IMR-90 (cell line): ENCODE measurements at regions of chr6 and their contacts with region 1.

Region 1: DNA sequence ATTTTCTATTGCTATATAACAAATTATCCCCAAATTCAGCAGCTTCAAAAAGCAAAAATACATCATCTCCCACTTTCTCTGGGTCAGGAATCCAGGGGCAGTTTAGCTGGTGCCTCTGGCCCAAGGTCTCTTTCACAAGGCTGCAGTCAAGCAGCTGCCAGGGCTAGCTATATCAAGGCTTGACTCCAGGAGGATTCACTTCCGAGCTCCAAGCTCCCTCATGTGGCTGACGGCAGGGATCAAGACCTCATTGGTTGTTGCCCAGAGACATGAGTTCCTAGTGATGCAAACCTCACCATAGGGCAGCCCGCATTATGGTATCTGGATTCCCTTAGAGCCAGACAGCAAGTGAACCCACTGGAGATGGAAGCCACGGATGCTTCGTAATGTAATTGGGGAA is 1.3 kb upstream of the VNN1 start:
- DNase-seq: peak; percentile 76
- ATAC-seq: peak; percentile 88
- H3K4me3 ChIP-seq: no peak overlapping the region
- H3K27ac ChIP-seq: no peak overlapping the region
- H3K4me1 ChIP-seq: 0 out of 2 replicates have a peak, but pooled peaks cover 3% of the 10 kb centered on the region
- H3K27me3 ChIP-seq: no peaks in the 10 kb centered on the region
- CTCF ChIP-seq: peak; percentile 50
- POLR2A ChIP-seq: no peak
- RAD21 ChIP-seq: peak; percentile 57

Region 2: DNA sequence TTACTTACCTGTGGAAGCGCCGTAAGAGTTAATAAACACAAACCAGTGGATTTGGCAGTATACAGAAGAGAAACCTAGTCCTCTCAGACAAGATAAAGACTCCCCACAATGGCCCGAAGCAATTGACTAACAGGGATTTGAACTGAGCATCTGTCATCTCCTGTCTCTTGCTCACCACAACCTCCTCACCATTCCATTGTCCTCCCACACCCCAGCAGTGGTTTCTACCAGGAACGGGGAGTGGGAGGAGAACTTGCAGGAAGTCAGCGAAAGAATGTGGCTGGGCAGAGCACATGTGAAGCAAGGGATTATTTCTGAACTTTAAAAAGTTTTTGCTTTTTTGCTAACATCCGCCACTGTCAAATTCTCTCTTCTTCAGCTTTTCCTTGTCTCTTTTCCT is 31.7 kb before region 1 on chr6:
- CTCF ChIA-PET with region 1: interaction called, 3 read pairs
- POLR2A ChIA-PET with region 1: no interaction called
- dilution Hi-C with region 1: no loop called
- in situ Hi-C with region 1: no loop called
- intact Hi-C with region 1: loop called (anchors 5 kb)
- DNase-seq: peak; percentile 74
- ATAC-seq: 0 out of 2 replicates have a peak, but pooled peaks have one; percentile 13
- H3K4me3 ChIP-seq: no peak overlapping the region
- H3K27ac ChIP-seq: no peak overlapping the region
- H3K4me1 ChIP-seq: peaks cover 2% of the 10 kb centered on the region
- H3K27me3 ChIP-seq: no peaks in the 10 kb centered on the region; the same call in 1 of the 2 replicates
- CTCF ChIP-seq: no peak
- POLR2A ChIP-seq: no peak
- RAD21 ChIP-seq: no peak